ENCODE measurements at regions of chr5 and their contacts with region 1.

Region 1: DNA sequence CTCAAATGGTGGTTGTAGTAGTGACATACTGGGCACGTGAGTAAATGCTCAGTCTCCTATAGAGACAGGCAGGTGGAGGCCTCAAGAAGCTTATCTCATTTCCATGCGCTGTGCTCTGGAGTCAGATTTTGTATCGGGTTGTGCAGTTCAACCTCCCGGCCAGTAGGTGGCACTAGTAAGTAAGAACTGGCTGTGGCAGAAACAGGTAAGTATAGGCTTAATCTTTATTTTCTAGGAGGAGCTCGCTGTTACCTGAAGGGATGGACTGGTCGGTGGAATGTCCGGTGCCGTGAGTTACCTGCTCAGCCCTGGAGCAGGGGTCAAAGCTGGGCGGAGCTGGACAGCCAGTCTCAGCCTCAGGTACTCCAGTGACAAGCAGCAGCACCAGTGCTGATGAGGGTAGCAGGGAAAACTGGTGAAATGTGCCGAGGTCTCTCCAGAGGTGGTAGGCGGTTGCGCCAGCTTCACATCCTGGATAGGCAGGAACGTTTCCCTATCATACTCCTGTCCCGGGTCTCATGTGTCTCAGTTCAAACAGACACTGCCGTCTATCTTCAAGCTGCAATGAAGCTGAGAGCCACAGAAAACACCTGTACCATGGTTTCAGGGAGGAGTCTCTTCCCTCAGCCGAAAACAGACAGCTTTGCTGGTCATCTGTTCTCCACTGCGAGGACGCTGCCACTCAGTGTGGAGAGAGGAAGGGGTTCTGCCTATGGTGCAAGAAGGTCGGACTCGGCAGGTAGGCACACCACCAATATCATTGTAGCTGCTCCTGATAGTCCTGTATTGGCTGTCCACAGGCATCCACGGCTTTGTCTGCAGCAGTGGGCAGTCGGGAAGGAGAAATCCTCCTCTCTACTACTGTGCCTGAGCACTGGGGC is 880.3 kb upstream of the SEMA6A start:
- DNase-seq: peak; percentile 49
- H3K4me3 ChIP-seq: no peak overlapping the region
- H3K27ac ChIP-seq: no peak overlapping the region
- H3K4me1 ChIP-seq: no peaks in the 10 kb centered on the region
- H3K27me3 ChIP-seq: no peaks in the 10 kb centered on the region
- CTCF ChIP-seq: peak; percentile 84

Region 2: DNA sequence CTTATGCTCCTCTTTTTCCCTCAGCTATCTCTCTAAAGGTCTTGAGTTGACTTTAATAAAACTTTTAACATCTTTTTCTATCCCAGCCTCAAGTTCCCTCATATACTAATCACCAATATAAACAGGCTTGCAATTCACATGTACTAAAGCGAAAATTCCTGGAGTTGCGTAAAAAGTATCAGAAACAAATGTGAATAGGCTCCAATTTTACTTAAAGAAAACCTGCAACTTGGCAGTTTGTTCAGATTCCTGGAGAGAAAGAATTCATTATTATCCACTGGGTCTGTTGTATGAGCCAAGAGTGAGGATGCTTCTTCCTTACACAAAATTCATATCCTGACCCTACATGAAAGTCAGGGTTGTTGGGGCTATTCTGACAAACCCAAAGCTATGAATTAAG is 1149.2 kb after region 1 on chr5:
- CTCF ChIA-PET with region 1: no interaction called
- POLR2A ChIA-PET with region 1: no interaction called
- intact Hi-C with region 1: loop called (anchors 10 kb)
- DNase-seq: no peak
- H3K4me3 ChIP-seq: no peak overlapping the region
- H3K27ac ChIP-seq: no peak overlapping the region
- H3K4me1 ChIP-seq: no peaks in the 10 kb centered on the region
- H3K27me3 ChIP-seq: no peaks in the 10 kb centered on the region
- CTCF ChIP-seq: no peak

Region 3: DNA sequence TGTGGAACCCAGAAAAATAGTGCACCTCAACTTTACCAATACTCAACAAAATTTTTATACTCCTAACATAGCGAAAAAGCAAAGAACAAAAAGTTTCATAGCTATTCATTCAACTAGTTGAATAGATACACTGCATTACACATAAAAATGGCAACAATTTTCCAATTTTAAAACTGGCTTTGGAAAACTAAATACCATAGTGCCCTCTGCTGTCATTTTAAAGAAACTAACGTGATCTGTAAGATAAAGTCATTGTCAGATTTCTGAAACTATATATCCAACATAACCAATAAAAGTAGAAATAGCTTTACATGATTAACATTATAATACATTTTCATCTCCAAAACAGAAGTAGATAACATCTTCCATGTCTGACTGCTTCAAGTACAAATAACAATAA is 1501.8 kb after region 1 on chr5:
- CTCF ChIA-PET with region 1: interaction called, 3 read pairs
- POLR2A ChIA-PET with region 1: no interaction called
- intact Hi-C with region 1: loop called (anchors 10 kb)
- DNase-seq: peak; percentile 51
- H3K4me3 ChIP-seq: no peak overlapping the region
- H3K27ac ChIP-seq: no peak overlapping the region
- H3K4me1 ChIP-seq: no peaks in the 10 kb centered on the region
- H3K27me3 ChIP-seq: no peaks in the 10 kb centered on the region
- CTCF ChIP-seq: peak; percentile 66

Measured in A673 (cell line).